ENCODE measurements at regions of chr14 and their contacts with region 1.

Region 1: DNA sequence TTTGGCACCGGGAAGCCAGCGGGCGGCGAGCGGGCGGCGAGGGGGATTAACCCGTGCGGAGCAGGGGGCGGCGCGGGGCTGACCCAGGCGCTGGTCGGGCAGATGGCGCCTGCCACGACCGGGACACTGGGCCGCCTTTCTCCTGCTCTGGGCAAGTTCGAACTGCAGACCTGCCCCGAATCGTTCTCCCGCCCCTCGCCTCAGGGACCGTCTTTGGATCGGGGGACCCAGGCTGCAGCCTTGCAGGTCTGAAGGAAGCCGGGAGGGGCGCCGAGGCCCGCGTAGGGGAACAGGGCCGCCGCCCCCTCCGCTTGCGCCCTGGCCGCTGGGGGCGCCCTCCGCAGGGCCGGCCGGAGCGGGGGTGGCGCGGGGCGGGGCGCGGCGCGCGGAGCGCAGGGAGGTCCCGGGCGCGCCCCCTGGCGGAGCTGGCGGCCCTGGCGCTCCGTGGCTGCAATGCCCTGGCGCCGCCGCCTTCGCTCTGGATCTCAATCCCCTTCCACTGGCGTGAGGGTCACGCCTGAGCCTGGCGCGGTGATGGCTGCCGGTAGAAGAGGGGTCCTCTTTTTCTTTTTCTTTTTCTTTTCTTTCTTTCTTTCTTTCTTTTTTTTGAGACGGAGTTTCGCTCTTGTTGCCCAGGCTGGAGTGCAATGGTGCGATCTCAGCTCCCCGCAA is 449 bp upstream of the LTBP2 start:
- DNase-seq: peak; percentile 88
- ATAC-seq: peak; percentile 84
- H3K4me3 Mint-ChIP-seq: peak overlapping the region; percentile 76
- H3K27ac Mint-ChIP-seq: no peak overlapping the region
- H3K4me1 Mint-ChIP-seq: peaks cover 21% of the 10 kb centered on the region
- H3K27me3 Mint-ChIP-seq: peaks cover 68% of the 10 kb centered on the region
- CTCF ChIP-seq: peak; percentile 40

Region 2: GRCh38 chr14:74508292-74508731 is 104.2 kb before region 1 on chr14:
- CTCF ChIA-PET with region 1: interaction called, 20 read pairs
- POLR2A ChIA-PET with region 1: no interaction called
- DNase-seq: peak; percentile 76
- ATAC-seq: peak; percentile 92
- H3K4me3 Mint-ChIP-seq: no peak overlapping the region
- H3K27ac Mint-ChIP-seq: no peak overlapping the region
- H3K4me1 Mint-ChIP-seq: peaks cover 25% of the 10 kb centered on the region
- H3K27me3 Mint-ChIP-seq: peaks cover 8% of the 10 kb centered on the region
- CTCF ChIP-seq: no peak

Region 3: GRCh38 chr14:74566174-74567125 is 46.0 kb before region 1 on chr14:
- CTCF ChIA-PET with region 1: interaction called, 110 read pairs
- POLR2A ChIA-PET with region 1: no interaction called
- DNase-seq: no peak
- ATAC-seq: no peak
- H3K4me3 Mint-ChIP-seq: no peak overlapping the region
- H3K27ac Mint-ChIP-seq: 0 out of 2 replicates have a peak overlapping the region, but pooled peaks have one; percentile 36
- H3K4me1 Mint-ChIP-seq: peaks cover 18% of the 10 kb centered on the region
- H3K27me3 Mint-ChIP-seq: no peaks in the 10 kb centered on the region
- CTCF ChIP-seq: no peak

Region 4: DNA sequence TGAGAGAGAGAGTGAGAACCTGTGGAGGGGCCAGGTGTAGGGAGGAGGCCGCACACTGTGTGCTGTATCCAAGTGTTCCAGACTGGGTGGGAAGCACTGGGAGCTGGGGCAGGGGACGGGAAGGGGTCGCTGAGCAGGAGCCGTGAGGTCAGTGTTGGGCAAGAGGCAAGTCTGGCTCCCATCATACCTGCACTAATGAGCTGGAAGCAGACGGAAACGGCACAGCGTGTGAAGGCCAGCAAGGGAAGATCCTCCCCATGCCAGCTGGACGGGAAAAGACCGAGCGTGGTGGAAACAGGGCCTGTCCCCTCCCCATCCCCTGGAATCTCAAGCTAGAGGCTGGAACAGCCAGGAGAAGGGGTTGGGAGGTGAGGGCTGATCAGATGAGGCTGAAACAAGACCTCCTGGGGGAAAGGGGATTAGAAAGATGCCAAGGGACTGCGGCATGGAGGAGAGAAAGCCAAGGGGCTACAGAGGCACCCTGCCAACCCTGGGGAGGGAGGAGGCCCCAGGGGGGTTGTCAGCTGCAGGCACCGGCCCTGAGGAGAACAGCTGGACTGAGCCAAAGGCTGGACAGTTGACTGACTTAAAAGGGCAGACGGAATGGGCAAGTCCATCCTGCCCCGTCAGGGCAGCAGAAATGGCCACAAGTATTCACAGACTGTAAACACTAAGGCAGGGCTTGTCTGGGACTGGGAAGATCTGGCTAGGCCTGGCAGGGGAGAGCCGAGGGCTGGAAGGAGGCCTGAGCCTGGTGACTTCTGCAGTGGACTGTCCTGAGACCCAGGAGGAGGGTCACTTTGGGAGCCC is 18.6 kb after region 1 on chr14:
- CTCF ChIA-PET with region 1: interaction called, 32 read pairs
- POLR2A ChIA-PET with region 1: no interaction called
- DNase-seq: no peak
- ATAC-seq: no peak; the same call in 1 of the 2 replicates
- H3K4me3 Mint-ChIP-seq: no peak overlapping the region
- H3K27ac Mint-ChIP-seq: peak overlapping the region; percentile 57; the same call in 1 of the 2 replicates
- H3K4me1 Mint-ChIP-seq: peaks cover 28% of the 10 kb centered on the region
- H3K27me3 Mint-ChIP-seq: no peaks in the 10 kb centered on the region; the same call in 1 of the 2 replicates
- CTCF ChIP-seq: no peak

Region 5: DNA sequence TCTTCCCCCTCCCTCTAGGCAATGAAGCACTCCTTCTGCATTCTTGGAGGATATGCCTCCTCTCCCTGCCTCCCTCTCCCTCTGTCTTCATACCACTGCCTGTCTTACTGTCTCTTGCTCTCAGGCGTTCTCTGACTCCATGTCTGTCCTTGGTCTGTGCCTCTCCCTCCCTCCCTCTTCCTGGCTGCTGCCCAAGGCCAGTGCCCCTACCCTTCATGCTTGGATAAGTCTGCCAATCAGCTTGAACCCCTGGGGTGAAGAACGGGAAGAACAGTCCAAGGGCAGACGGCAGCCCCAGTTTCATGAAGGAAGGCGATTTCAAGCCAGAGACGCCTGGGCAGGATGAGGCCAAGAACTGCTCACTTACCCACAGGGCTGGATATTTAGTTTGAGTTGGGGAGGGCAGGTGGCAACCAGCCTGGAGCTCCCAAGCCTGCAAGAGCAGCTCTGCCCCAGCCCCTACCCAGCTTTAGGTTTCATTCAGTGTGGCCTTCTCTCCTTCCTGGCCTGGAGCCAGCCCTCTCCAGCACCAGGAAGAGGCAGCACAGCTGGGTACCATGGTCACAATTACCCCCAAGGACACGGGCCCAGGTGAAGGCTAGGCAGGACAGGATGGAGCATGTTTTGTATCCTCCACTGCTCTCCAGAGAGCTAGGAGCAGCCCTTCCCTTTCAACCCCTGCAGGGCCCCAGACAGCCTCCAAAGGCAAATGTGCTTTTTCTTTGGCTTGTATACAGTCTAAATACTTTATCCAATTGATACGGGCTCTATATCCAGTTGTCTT is 35.4 kb after region 1 on chr14:
- CTCF ChIA-PET with region 1: interaction called, 18 read pairs
- POLR2A ChIA-PET with region 1: no interaction called
- DNase-seq: no peak
- ATAC-seq: peak; percentile 68
- H3K4me3 Mint-ChIP-seq: no peak overlapping the region
- H3K27ac Mint-ChIP-seq: peak overlapping the region; percentile 63; the same call in 1 of the 2 replicates
- H3K4me1 Mint-ChIP-seq: peaks cover 22% of the 10 kb centered on the region
- H3K27me3 Mint-ChIP-seq: no peaks in the 10 kb centered on the region
- CTCF ChIP-seq: no peak

Region 6: DNA sequence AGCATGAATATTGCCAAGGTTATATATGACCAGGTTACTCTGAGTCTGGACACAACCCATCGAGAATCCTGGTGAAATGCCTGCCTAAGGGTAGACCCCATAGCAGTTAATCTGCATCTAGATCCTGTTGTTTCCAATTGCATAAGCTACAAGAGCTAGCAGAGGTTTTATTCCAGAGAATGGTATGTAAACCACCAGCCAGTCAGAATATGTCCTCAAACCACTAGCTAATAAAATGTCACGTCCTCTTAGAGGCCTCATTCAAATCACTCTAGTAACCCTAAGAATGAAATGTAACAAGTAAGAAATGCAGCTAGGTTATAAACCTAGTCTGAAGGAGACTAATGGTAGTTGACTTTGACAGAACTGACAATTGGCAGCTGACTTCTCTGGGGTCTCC is 141.7 kb after region 1 on chr14:
- CTCF ChIA-PET with region 1: no interaction called
- POLR2A ChIA-PET with region 1: no interaction called
- DNase-seq: no peak
- ATAC-seq: no peak
- H3K4me3 Mint-ChIP-seq: no peak overlapping the region
- H3K27ac Mint-ChIP-seq: no peak overlapping the region
- H3K4me1 Mint-ChIP-seq: no peaks in the 10 kb centered on the region
- H3K27me3 Mint-ChIP-seq: peaks cover 4% of the 10 kb centered on the region; the same call in 1 of the 2 replicates
- CTCF ChIP-seq: no peak

Region 7: DNA sequence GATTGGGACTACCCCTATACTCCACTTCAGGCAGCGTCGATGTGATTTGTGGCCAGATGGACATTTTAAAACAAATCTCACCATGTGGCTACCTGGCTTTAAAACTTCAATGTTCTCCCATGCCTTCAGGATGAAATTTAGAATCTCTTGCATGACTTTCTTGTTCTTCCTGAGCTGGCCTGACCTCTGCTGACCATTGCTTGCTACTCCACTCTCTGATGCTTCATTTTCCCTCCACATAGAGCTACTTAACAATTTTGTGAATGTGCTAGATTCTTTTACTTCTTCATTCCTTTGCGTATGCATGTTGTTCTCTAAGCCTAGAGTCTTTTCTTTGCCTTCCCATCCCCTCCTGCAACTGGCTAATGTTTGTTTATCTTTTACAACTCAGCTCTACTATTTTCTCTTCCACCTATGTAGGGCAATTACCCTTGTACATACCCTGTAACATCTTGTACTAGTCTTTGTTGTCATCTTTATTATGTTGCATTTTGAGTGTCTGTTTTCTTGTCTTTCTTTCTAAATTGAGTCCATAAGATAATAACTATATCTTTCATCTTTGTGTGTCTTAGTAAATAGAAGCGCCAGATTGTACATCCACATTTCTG is 191.8 kb after region 1 on chr14:
- CTCF ChIA-PET with region 1: interaction called, 21 read pairs
- POLR2A ChIA-PET with region 1: no interaction called
- DNase-seq: no peak
- ATAC-seq: peak; percentile 48; the same call in 1 of the 2 replicates
- H3K4me3 Mint-ChIP-seq: no peak overlapping the region
- H3K27ac Mint-ChIP-seq: no peak overlapping the region; the same call in 1 of the 2 replicates
- H3K4me1 Mint-ChIP-seq: no peaks in the 10 kb centered on the region
- H3K27me3 Mint-ChIP-seq: no peaks in the 10 kb centered on the region
- CTCF ChIP-seq: no peak

Measured in WTC11 (cell line).